ENCODE measurements at regions of chr12 and their contacts with region 1.

Region 1: DNA sequence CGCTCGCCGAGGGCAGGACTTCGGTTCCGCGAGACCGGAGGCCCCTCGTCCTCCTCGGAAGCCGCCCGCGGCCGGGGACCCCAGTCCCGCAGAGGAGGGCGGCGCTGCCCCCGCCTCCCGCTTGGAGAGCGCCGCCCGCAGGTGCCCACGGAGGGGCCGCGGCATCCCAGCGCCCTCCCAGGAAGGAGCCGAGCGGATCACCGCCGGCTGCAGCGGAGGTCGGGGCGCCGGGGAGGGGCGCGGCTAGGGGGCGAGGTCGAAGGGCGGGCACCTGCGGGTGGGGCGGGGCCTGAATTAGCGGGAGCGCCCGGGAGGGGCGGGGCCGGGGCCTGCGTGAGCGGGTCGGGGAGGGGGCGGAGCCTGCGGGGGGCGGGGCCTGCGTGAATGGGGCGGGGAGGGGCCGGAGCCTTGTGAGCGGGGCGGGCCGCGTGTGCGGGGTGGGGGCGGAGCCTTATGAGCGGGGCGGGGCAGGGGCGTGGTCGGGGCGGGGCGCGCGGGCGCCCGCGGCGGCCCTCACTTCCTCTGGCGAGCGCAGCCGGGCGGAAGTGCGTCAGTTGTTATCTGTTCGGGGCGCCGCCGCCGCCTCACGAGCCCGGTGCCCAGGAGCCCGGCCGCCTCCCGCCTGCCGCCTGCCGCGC is at the start of gene FBRSL1:
- DNase-seq: peak; percentile 96
- H3K4me3 Mint-ChIP-seq: peak within 1 kb of the TSS; percentile 89
- H3K27ac Mint-ChIP-seq: peak within 1 kb of the TSS; percentile 95
- H3K4me1 Mint-ChIP-seq: peaks cover 45% of the 10 kb centered on the region
- H3K27me3 Mint-ChIP-seq: no peaks in the 10 kb centered on the region
- total RNA-seq, gene FBRSL1: 91.3 and 96.1 TPM in 2 replicates

Region 2: DNA sequence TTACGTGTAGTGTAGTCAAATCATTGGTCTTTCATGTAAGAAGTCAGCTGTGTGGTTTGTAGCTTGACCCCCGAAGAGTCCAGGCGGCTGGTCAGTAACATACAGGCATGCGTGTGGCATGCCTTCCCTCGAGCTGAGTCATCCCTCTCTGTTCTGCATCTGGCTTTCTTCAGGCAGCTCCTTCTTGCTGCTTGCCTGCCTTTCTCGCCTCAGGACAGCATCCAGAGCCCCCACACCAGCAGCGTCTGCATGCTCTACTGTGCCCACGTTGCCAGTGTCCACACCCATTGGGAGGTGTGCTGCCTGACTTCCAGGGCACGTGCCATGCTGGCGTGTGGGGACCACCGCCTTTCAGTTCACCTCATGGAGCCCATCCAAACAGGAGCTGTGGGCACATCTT is 443.2 kb before region 1 on chr12:
- intact Hi-C with region 1: no loop called
- DNase-seq: no peak
- H3K4me3 Mint-ChIP-seq: no peak overlapping the region
- H3K27ac Mint-ChIP-seq: no peak overlapping the region
- H3K4me1 Mint-ChIP-seq: peaks cover under 1% of the 10 kb centered on the region
- H3K27me3 Mint-ChIP-seq: no peaks in the 10 kb centered on the region

Region 3: GRCh38 chr12:132178801-132179401 is 310.8 kb before region 1 on chr12:
- intact Hi-C with region 1: no loop called
- DNase-seq: peak; percentile 80
- H3K4me3 Mint-ChIP-seq: peak overlapping the region; percentile 63
- H3K27ac Mint-ChIP-seq: peak overlapping the region; percentile 50
- H3K4me1 Mint-ChIP-seq: peaks cover 16% of the 10 kb centered on the region
- H3K27me3 Mint-ChIP-seq: peaks cover 4% of the 10 kb centered on the region

Region 4: GRCh38 chr12:132445884-132446632 is 43.7 kb before region 1 on chr12:
- intact Hi-C with region 1: loop called (anchors 1 kb)
- DNase-seq: peak; percentile 89
- H3K4me3 Mint-ChIP-seq: peak overlapping the region; percentile 98
- H3K27ac Mint-ChIP-seq: peak overlapping the region; percentile 99
- H3K4me1 Mint-ChIP-seq: peaks cover 33% of the 10 kb centered on the region
- H3K27me3 Mint-ChIP-seq: no peaks in the 10 kb centered on the region

Region 5: GRCh38 chr12:132477017-132477702 is 12.6 kb before region 1 on chr12:
- intact Hi-C with region 1: loop called (anchors 1 kb)
- DNase-seq: peak; percentile 72
- H3K4me3 Mint-ChIP-seq: peak overlapping the region; percentile 59
- H3K27ac Mint-ChIP-seq: no peak overlapping the region
- H3K4me1 Mint-ChIP-seq: peaks cover 27% of the 10 kb centered on the region
- H3K27me3 Mint-ChIP-seq: peaks cover 2% of the 10 kb centered on the region

Region 6: DNA sequence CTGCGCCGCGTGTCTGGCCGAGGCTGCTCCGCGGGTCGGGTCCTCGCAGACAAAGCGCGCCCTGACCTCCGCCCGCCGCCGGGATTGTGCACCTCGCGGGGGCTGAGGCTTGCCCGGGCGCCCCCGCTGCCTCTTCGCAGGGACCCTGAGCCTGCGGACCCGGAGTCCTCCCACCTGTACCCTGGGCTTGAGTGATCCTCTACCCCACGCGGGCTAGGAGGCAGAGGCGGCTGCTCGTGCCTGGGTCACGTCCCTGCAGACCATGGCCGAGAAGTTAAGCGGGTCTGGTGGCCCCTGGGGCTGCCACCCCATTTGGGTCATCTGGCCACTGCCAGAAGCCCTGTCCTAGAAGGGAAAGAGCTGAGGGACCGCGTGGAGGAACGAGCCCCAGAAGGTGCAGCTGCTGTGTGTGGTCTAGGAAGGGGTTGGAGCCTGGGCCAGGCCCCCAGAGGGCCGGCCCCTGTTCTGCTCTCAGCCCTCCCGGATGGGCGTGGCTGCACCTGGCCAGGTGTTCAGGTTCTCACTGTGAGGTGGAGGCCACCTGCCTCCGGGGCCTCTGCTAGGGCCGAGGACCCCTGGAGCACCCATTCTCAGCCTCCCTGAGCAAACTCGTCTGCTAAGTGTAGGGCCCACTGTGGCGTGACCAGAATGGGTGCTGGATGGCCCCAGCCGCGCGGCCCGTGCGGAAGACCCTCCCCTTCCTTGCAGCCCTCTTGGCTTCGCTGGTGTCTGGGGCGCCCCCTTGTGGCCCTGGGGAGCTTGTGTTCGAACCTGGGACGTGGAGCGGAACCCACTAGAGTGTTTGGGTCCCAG is 71.1 kb after region 1 on chr12:
- intact Hi-C with region 1: loop called (anchors 2 kb)
- DNase-seq: peak; percentile 92
- H3K4me3 Mint-ChIP-seq: peak overlapping the region; percentile 81
- H3K27ac Mint-ChIP-seq: peak overlapping the region; percentile 51
- H3K4me1 Mint-ChIP-seq: peaks cover 6% of the 10 kb centered on the region
- H3K27me3 Mint-ChIP-seq: peaks cover 9% of the 10 kb centered on the region

Measured in activated CD4-positive, alpha-beta T cell treated with anti-CD3 and anti-CD28 coated beads, Interleukin-2, amount 10 ng/mL, durations not matched to agents 24 days and 14 days (primary cell).